Gastrocnemius medialis (tissue), 4 donors: ENCODE measurements at regions of chr1 and their contacts with region 1.

Region 1: DNA sequence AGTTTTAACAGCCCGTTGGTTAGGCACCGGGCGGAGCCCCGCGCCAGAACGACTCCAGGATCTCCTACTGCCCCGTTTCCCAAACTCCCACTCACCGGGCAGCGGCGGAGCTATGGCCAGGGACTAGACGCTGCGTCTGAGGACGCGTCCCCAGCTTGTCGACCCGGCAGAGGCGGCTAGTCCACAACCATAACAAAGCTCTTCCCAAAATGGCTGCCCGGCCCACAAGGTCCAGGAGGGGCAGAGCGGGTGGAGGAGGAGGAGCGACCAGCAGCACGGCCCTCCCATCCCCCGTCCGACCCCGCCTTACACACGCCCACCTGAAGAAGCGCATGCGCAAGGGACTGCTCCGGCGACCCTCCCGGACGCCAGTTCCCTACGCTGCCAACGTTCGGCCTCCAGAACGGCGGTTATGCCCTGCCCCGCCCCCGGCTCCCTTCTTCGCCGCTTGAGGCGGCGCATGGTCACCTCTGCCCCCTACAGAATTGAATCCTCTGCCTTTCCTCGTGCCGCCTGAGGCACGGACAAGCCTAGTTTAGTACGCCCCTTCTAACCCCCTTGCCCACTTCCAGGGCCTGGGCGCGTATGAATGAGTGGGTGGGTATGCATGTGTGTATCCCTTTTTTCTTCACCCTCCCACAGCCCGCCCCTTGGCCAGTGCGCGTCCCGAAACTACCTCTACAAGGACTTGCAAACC is at the start of gene GPBP1L1:
- DNase-seq: peak; percentile 98
- ATAC-seq: peak; percentile 76
- H3K4me3 ChIP-seq: peak within 1 kb of the TSS; percentile 87 to 99 (median 94)
- H3K27ac ChIP-seq: peak within 1 kb of the TSS; percentile 95 to 98 (median 97)
- H3K4me1 ChIP-seq: peaks cover 39 to 43% of the 10 kb centered on the region in 2 donors
- H3K27me3 ChIP-seq: no peaks in the 10 kb centered on the region
- CTCF ChIP-seq: peak in 2 of 5 experiments; percentile 4 to 20
- POLR2A ChIP-seq: peak; percentile 73 to 83
- total RNA-seq, gene GPBP1L1: 58.5 to 99.5 (median 81.8) TPM

Region 2: DNA sequence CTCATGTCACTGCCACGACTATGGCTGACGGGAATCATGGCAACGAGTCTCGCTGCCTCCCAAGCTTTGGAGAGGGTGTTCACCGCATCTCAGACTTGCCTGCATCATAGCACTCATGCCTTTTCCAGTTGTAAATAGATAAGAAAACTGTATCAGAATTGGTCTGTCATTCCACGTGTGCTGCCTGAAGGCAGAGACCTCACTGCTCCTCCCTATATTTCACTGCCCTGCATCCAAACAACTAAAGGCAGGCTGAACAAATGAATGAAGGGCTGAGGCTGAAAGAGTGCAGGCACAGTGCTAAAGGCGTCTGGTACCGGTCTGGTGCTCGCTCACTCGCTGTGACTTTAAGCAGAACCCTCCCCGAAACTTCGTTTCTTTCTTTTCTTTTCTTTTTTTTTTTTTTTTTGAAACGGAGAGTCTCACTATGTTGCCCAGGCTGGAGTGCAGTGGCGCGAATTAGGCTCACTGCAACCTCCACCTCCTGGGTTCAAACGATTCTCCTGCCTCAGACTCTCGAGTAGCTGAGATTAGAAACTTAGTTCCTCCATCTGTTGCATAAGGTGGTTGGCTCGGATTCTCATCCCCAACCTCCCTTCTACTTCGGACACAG is 700.6 kb before region 1 on chr1:
- in situ Hi-C with region 1: no loop called
- intact Hi-C with region 1: loop called (anchors 5 kb)
- DNase-seq: no peak
- ATAC-seq: peak; percentile 83 to 86
- H3K4me3 ChIP-seq: peak overlapping the region; percentile 64 to 85 (median 81)
- H3K27ac ChIP-seq: peak overlapping the region; percentile 81 to 96 (median 88)
- H3K4me1 ChIP-seq: peaks cover 24 to 28% of the 10 kb centered on the region in 2 donors
- H3K27me3 ChIP-seq: no peaks in the 10 kb centered on the region
- CTCF ChIP-seq: no peak
- POLR2A ChIP-seq: no peak

Region 3: DNA sequence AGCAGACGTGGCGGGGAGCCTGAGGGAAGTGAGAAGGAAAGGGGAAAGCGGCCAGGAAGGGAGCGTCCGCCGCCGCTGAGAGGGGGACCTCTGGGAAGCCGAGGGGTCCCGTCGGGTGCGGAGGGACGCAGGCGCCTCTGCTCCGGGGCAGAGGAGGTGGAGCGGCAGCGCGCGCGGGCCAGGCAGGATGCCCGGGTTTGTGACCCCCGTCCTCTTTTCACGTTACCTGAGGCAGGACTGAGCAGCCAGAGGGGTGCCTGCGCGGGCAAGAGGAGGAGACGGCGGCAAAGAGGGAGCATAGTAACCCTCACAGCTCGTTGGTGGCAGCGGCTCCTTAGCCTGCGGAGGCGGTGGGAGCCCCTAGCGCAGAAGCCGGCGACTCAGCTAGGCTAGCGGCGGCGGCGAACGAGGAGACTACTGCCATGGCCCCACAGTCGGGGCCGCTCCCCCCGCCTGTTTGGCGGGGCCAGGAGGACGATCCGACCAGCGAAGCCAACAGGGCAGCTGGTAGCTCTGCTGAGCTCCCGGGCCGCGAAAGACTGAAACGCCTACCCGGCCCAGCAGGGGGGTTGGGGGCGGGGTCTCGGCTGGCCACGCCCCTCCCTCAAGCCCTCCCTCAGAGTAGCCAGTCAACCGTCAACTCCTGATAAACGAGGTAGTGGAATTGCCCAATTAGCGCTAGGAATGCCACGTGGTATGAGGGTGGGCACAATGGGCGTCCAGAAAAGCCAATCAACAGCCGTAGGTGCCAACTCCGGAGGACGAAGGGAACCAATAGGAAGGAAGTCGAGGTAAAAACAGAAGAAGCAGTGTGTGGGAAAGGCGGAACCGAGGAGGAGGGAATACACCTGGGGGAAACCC is 195.6 kb before region 1 on chr1 and contains the start of gene TESK2:
- in situ Hi-C with region 1: no loop called
- intact Hi-C with region 1: loop called (anchors 5 kb)
- DNase-seq: peak; percentile 98 to 99
- ATAC-seq: peak; percentile 95 to 98
- H3K4me3 ChIP-seq: peak within 1 kb of the TSS; percentile 68 to 99 (median 90)
- H3K27ac ChIP-seq: peak within 1 kb of the TSS; percentile 87 to 96 (median 92)
- H3K4me1 ChIP-seq: peaks cover 14 to 19% of the 10 kb centered on the region in 2 donors
- H3K27me3 ChIP-seq: no peaks in the 10 kb centered on the region
- CTCF ChIP-seq: peak in 4 of 5 experiments; percentile 27 to 56 (median 30)
- POLR2A ChIP-seq: peak; percentile 89 to 92
- total RNA-seq, gene TESK2: 3.4 to 5.8 (median 4.5) TPM

Region 4: GRCh38 chr1:45750298-45751038 is 64.0 kb after region 1 on chr1 and contains the start of gene IPP:
- in situ Hi-C with region 1: no loop called
- intact Hi-C with region 1: loop called (anchors 2 kb)
- DNase-seq: peak; percentile 95 to 97
- ATAC-seq: peak; percentile 91 to 93
- H3K4me3 ChIP-seq: peak within 1 kb of the TSS; percentile 65 to 92 (median 72)
- H3K27ac ChIP-seq: peak within 1 kb of the TSS; percentile 93 to 100 (median 94)
- H3K4me1 ChIP-seq: peaks cover 11% of the 10 kb centered on the region in 2 donors
- H3K27me3 ChIP-seq: no peaks in the 10 kb centered on the region
- CTCF ChIP-seq: peak in 2 of 5 experiments; percentile 17 to 29
- POLR2A ChIP-seq: peak; percentile 93 to 95
- total RNA-seq, gene IPP: 5.6 to 11.7 (median 7.1) TPM

Region 5: DNA sequence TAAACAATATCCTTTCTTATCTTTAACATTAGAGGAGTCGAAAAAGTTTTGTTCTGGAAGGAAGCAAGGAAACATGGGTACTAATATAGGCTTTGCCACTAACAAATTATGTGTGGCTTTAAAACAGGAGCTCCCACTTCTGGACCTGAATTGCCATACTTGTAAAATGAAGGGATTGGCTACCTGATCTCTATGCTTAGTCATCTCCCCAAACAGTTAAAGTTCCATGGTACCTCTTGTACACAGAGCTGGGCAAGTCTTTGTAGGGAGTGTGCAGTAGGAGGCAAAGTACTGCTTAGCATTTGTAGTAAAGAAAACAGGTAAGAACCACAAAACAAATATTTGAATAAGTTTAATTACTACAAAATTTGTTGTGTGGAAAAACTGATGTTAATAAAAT is 198.2 kb after region 1 on chr1:
- in situ Hi-C with region 1: no loop called
- intact Hi-C with region 1: loop called (anchors 5 kb)
- DNase-seq: no peak
- ATAC-seq: peak; percentile 50 to 81
- H3K4me3 ChIP-seq: no peak overlapping the region
- H3K27ac ChIP-seq: peak overlapping the region; percentile 37 to 74 (median 56)
- H3K4me1 ChIP-seq: peaks cover 14 to 37% of the 10 kb centered on the region in 2 donors
- H3K27me3 ChIP-seq: no peaks in the 10 kb centered on the region
- CTCF ChIP-seq: no peak
- POLR2A ChIP-seq: no peak